GM12878 (cell line): ENCODE measurements at regions of chr7 and their contacts with region 1.

Region 1: DNA sequence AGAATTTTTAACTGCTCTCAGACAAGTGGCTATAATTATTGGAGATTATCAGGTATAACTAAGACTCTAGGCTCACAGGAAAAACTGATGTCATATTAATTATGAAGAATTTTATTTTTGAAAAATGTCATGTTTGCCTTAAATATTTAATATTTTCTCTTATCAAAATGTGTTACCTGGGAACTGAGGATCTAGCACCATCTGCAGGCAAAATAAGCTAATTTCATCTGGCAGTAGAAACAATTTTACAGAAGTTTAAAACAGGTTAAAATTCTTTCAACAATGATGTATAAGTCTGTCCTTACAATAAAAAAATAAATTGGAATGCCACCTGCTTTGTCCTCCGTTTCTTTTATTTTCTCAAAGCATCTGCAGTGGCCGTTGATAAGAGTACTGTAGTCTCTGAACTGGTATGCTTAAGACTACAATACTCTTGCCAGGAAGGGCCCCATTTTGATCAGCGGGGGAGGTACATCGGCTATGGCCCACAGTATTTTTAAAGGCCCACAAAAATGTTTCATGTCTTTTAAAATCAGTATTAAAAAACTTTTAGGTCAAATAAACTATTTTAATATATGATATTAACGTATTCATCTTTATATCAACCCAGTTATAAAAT is 81.3 kb downstream of the VWDE start:
- DNase-seq: no peak
- ATAC-seq: peak; percentile 51
- H3K4me3 ChIP-seq: no peak overlapping the region
- H3K27ac ChIP-seq: no peak overlapping the region
- H3K4me1 ChIP-seq: no peaks in the 10 kb centered on the region
- H3K27me3 ChIP-seq: no peaks in the 10 kb centered on the region
- CTCF ChIP-seq: peak; percentile 49 to 62 (median 59); a peak in 5 of 6 replicates
- EP300 ChIP-seq: no peak
- POLR2A ChIP-seq: no peak
- RAD21 ChIP-seq: peak; percentile 91

Region 2: GRCh38 chr7:11427686-11428273 is 894.6 kb before region 1 on chr7:
- CTCF ChIA-PET with region 1: interaction called, 5 read pairs
- POLR2A ChIA-PET with region 1: no interaction called
- RAD21 ChIA-PET with region 1: interaction called, 6 read pairs
- SMC1A ChIA-PET with region 1: no interaction called
- in situ Hi-C with region 1: loop called (anchors 10 kb)
- intact Hi-C with region 1: loop called (anchors 1 kb)
- DNase-seq: no peak
- ATAC-seq: peak; percentile 71
- H3K4me3 ChIP-seq: no peak overlapping the region
- H3K27ac ChIP-seq: no peak overlapping the region
- H3K4me1 ChIP-seq: no peaks in the 10 kb centered on the region
- H3K27me3 ChIP-seq: no peaks in the 10 kb centered on the region
- CTCF ChIP-seq: peak; percentile 53 to 76 (median 55); a peak in 5 of 6 replicates
- EP300 ChIP-seq: no peak
- POLR2A ChIP-seq: no peak
- RAD21 ChIP-seq: peak; percentile 86

Region 3: DNA sequence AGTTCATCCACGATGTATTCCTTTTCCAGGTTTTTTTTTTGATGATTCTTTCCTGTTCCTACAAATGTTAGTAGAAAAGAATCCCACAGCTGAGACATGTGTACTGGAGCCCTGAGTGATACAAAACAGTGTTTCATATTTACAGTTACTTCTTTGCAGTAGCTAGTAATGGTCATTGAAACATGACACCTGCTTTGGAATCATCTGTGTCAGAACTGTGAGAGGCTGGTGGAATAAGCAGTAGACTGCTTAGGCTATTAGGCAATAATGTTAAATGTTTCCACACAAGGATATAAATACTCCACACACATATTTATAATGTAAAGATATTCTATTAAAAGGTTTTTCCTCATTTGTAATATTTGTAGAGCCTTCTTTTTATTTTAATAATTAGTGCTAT is 884.4 kb before region 1 on chr7:
- CTCF ChIA-PET with region 1: no interaction called
- POLR2A ChIA-PET with region 1: no interaction called
- RAD21 ChIA-PET with region 1: no interaction called
- SMC1A ChIA-PET with region 1: no interaction called
- in situ Hi-C with region 1: loop called (anchors 10 kb)
- intact Hi-C with region 1: no loop called
- DNase-seq: no peak
- ATAC-seq: no peak
- H3K4me3 ChIP-seq: no peak overlapping the region
- H3K27ac ChIP-seq: no peak overlapping the region
- H3K4me1 ChIP-seq: no peaks in the 10 kb centered on the region
- H3K27me3 ChIP-seq: no peaks in the 10 kb centered on the region; a peak in 1 of 4 replicates
- CTCF ChIP-seq: no peak
- EP300 ChIP-seq: no peak
- POLR2A ChIP-seq: no peak
- RAD21 ChIP-seq: no peak

Region 4: GRCh38 chr7:11835260-11835659 is 487.1 kb before region 1 on chr7:
- CTCF ChIA-PET with region 1: interaction called, 4 read pairs
- POLR2A ChIA-PET with region 1: no interaction called
- RAD21 ChIA-PET with region 1: interaction called, 6 read pairs
- SMC1A ChIA-PET with region 1: no interaction called
- in situ Hi-C with region 1: no loop called
- intact Hi-C with region 1: loop called (anchors 5 kb)
- DNase-seq: no peak
- ATAC-seq: no peak
- H3K4me3 ChIP-seq: no peak overlapping the region
- H3K27ac ChIP-seq: no peak overlapping the region
- H3K4me1 ChIP-seq: no peaks in the 10 kb centered on the region
- H3K27me3 ChIP-seq: peaks cover 1 to 16% of the 10 kb centered on the region in 2 experiments; a peak in 3 of 4 replicates
- CTCF ChIP-seq: peak in 1 of 3 experiments; percentile 20; a peak in 1 of 6 replicates
- EP300 ChIP-seq: no peak
- POLR2A ChIP-seq: no peak
- RAD21 ChIP-seq: peak; percentile 27

Region 5: DNA sequence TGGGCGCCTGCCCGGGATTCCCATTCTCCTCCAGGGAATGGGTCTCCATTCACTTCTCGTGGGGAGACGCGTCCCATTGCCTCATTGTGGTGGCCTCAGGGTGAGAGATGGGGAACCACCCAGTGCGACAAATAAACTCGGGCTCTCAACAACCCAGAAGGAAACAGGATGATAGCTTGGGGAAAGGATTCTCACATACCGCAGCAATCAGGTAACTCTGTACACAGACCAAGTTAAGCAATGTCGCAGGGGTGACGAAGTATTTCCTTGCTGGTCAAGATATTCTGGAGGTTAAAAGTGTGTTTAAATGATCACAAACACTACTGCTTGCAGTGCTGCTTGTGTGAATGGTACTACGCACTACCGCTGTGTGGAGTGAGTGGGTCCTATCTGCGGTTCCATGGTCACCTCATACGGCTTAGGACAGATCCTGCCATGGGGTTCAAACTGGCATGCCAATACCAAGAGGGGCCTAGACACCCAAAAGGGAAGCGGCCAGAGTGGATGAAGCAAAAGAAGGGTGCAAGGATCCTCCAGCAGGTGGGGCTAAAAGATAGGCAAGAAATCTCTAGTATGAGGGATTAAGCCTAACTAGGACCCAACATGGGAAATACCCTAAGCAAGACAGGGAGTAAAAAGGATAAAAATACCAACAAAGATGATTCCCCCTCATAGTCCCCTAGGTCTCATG is 255.1 kb before region 1 on chr7:
- CTCF ChIA-PET with region 1: interaction called, 11 read pairs
- POLR2A ChIA-PET with region 1: no interaction called
- RAD21 ChIA-PET with region 1: interaction called, 9 read pairs
- SMC1A ChIA-PET with region 1: interaction called, 7 read pairs
- in situ Hi-C with region 1: loop called (anchors 5 kb)
- intact Hi-C with region 1: loop called (anchors 1 kb)
- DNase-seq: peak; percentile 5
- ATAC-seq: peak; percentile 97
- H3K4me3 ChIP-seq: no peak overlapping the region
- H3K27ac ChIP-seq: no peak overlapping the region
- H3K4me1 ChIP-seq: no peaks in the 10 kb centered on the region
- H3K27me3 ChIP-seq: no peaks in the 10 kb centered on the region
- CTCF ChIP-seq: peak; percentile 57 to 69 (median 67)
- EP300 ChIP-seq: no peak
- POLR2A ChIP-seq: no peak
- RAD21 ChIP-seq: peak; percentile 89

Region 6: GRCh38 chr7:12211054-12211710 is 111.2 kb before region 1 on chr7 and contains the start of gene TMEM106B:
- CTCF ChIA-PET with region 1: interaction called, 6 read pairs
- POLR2A ChIA-PET with region 1: no interaction called
- RAD21 ChIA-PET with region 1: no interaction called
- SMC1A ChIA-PET with region 1: interaction called, 8 read pairs
- in situ Hi-C with region 1: no loop called
- intact Hi-C with region 1: loop called (anchors 2 kb)
- DNase-seq: peak; percentile 82
- ATAC-seq: peak; percentile 95
- H3K4me3 ChIP-seq: peak within 1 kb of the TSS; percentile 70
- H3K27ac ChIP-seq: peak within 1 kb of the TSS; percentile 71
- H3K4me1 ChIP-seq: peaks cover 4% of the 10 kb centered on the region
- H3K27me3 ChIP-seq: peaks cover 0 to 5% of the 10 kb centered on the region in 2 experiments; a peak in 1 of 4 replicates
- CTCF ChIP-seq: peak in 2 of 3 experiments; percentile 33 to 35; a peak in 3 of 6 replicates
- EP300 ChIP-seq: no peak
- POLR2A ChIP-seq: peak; percentile 94
- RAD21 ChIP-seq: peak; percentile 42; the same call in 1 of the 2 replicates
- polyA plus RNA-seq, gene TMEM106B: 3.7 to 5.4 TPM